Activated CD8-positive, alpha-beta T cell treated with anti-CD3 and anti-CD28 coated beads, Interleukin-2, amount 10 ng/mL, durations not matched to agents 7 days and 5 days (primary cell): ENCODE measurements at regions of chr1 and their contacts with region 1.

Region 1: GRCh38 chr1:9270290-9270883 is 22.3 kb upstream of the SPSB1 start:
- DNase-seq: no peak
- ATAC-seq: no peak
- H3K4me3 Mint-ChIP-seq: no peak overlapping the region
- H3K27ac Mint-ChIP-seq: peak overlapping the region; percentile 61
- H3K4me1 Mint-ChIP-seq: peaks cover 23% of the 10 kb centered on the region
- H3K27me3 Mint-ChIP-seq: no peaks in the 10 kb centered on the region

Region 2: DNA sequence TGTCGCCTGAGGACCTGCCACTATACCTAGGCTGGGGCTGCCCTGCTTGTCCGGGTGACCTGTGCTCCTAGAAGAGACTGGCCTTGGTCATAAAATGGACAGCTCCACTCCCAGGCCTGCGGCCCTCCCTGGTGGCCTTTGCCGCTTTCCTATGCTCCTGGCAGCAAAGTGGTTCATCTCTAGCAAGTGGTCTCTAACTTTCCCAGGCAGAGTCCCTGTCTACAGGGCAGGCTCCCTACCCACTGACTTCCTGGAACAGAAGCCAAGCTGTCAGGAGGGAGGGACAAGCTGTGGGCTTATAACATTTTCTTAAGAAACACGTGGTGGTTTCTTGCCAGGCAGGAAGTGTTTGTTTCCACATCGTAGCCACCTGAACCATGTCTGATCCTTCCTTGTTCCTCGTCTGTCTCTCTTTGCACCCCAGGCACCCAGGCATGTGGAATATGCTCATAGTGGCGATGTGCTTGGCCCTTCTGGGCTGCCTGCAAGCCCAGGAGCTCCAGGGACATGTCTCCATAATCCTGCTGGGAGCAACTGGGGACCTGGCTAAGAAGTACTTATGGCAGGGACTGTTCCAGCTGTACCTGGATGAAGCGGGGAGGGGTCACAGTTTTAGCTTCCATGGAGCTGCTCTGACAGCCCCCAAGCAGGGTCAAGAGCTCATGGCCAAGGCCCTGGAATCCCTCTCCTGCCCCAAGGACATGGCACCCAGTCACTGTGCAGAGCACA is 25.7 kb before region 1 on chr1:
- CTCF ChIA-PET with region 1: interaction called, 10 read pairs
- POLR2A ChIA-PET with region 1: no interaction called
- DNase-seq: peak; percentile 42
- ATAC-seq: peak; percentile 34
- H3K4me3 Mint-ChIP-seq: peak overlapping the region; percentile 32
- H3K27ac Mint-ChIP-seq: peak overlapping the region; percentile 26
- H3K4me1 Mint-ChIP-seq: peaks cover 50% of the 10 kb centered on the region
- H3K27me3 Mint-ChIP-seq: no peaks in the 10 kb centered on the region

Region 3: GRCh38 chr1:9281908-9282695 is 11.7 kb after region 1 on chr1:
- CTCF ChIA-PET with region 1: interaction called, 23 read pairs
- POLR2A ChIA-PET with region 1: no interaction called
- DNase-seq: no peak
- ATAC-seq: no peak
- H3K4me3 Mint-ChIP-seq: no peak overlapping the region
- H3K27ac Mint-ChIP-seq: peak overlapping the region; percentile 77
- H3K4me1 Mint-ChIP-seq: peaks cover 65% of the 10 kb centered on the region
- H3K27me3 Mint-ChIP-seq: peaks cover 9% of the 10 kb centered on the region

Region 4: GRCh38 chr1:9292361-9293240 is 22.2 kb after region 1 on chr1 and contains the start of gene SPSB1:
- CTCF ChIA-PET with region 1: interaction called, 28 read pairs
- POLR2A ChIA-PET with region 1: interaction called, 3 read pairs
- DNase-seq: peak; percentile 72
- ATAC-seq: peak; percentile 76
- H3K4me3 Mint-ChIP-seq: peak within 1 kb of the TSS; percentile 51
- H3K27ac Mint-ChIP-seq: no peak within 1 kb of the TSS
- H3K4me1 Mint-ChIP-seq: no peaks in the 10 kb centered on the region
- H3K27me3 Mint-ChIP-seq: peaks cover 11% of the 10 kb centered on the region
- total RNA-seq, gene SPSB1: 1.1 TPM

Region 5: GRCh38 chr1:9350013-9350908 is 79.9 kb after region 1 on chr1:
- CTCF ChIA-PET with region 1: no interaction called
- POLR2A ChIA-PET with region 1: no interaction called
- DNase-seq: no peak
- ATAC-seq: no peak
- H3K4me3 Mint-ChIP-seq: no peak overlapping the region
- H3K27ac Mint-ChIP-seq: no peak overlapping the region
- H3K4me1 Mint-ChIP-seq: no peaks in the 10 kb centered on the region
- H3K27me3 Mint-ChIP-seq: no peaks in the 10 kb centered on the region

Region 6: DNA sequence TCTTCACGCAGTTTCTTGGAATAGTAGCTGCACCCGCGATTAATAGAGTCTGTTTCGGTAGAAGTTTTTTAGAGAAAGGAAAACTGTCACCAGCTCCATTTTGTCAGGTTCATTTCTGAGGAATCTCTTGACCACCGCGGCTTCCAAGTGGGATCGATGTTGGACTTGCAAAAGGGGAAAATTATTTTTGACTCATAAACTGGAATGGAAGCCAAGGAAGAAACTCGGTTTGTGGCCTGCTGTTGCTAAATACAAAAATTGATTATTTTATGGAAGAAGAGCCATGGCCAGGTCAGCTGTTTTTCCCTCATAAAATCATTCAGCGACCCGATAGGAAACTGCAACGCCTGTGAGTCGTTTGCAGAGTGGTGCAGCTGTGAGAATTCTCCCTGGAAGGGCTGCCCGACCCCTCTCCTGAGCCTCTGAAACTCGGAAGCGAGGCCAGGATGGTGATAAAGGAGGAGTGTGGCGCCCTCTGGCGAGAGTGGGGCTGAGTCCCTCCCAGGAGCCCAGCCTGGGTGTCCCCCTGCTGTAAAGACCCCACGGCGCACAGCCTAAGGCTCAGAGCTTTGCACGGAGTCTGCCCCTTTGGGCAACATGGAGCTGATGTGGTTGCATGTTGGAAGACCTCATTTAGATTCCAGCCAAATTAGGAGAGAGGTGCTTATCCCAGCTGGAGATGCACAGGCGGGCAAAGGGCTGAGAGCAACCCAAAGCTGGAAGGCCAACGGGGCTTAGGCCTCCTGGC is 185.3 kb after region 1 on chr1:
- CTCF ChIA-PET with region 1: interaction called, 40 read pairs
- POLR2A ChIA-PET with region 1: no interaction called
- DNase-seq: peak; percentile 70
- ATAC-seq: peak; percentile 60
- H3K4me3 Mint-ChIP-seq: no peak overlapping the region
- H3K27ac Mint-ChIP-seq: no peak overlapping the region
- H3K4me1 Mint-ChIP-seq: no peaks in the 10 kb centered on the region
- H3K27me3 Mint-ChIP-seq: peaks cover 3% of the 10 kb centered on the region

Region 7: GRCh38 chr1:9494929-9495758 is 224.8 kb after region 1 on chr1:
- CTCF ChIA-PET with region 1: interaction called, 68 read pairs
- POLR2A ChIA-PET with region 1: no interaction called
- DNase-seq: peak; percentile 74
- ATAC-seq: peak; percentile 86
- H3K4me3 Mint-ChIP-seq: peak overlapping the region; percentile 70
- H3K27ac Mint-ChIP-seq: peak overlapping the region; percentile 8
- H3K4me1 Mint-ChIP-seq: peaks cover 11% of the 10 kb centered on the region
- H3K27me3 Mint-ChIP-seq: peaks cover 10% of the 10 kb centered on the region